ENCODE measurements at regions of chr18 and their contacts with region 1.

Region 1: DNA sequence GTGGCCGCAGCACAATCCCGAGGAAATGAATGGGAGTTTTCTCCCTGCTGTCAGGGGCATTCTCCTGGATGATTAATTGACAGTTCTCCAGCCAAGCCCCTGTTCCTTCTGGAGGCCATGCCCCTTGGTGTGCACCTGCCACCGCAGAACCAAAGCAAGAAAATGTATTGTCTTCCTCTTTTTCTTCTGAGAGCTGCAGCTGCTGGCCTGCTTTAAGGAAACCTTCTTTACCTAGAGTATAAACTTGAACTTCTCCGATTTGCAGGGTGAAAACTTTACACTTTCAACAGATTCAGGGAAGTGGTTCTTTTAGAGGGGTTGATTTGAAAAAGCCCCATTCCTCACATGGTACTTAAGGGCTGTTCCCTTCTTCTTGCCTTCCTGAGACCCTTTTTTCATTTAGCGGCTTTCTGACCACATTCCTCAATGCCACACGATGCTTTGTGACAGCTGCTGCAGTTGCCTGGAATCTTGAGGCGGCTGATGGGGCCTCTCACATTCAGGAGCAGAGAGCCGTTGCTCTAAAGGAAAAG is 402.8 kb downstream of the TXNL1 start:
- DNase-seq: no peak
- H3K4me3 ChIP-seq: no peak overlapping the region
- H3K27ac ChIP-seq: no peak overlapping the region
- H3K4me1 ChIP-seq: peaks cover 0 to 3% of the 10 kb centered on the region in 2 donors
- H3K27me3 ChIP-seq: no peaks in the 10 kb centered on the region
- CTCF ChIP-seq: no peak

Region 2: DNA sequence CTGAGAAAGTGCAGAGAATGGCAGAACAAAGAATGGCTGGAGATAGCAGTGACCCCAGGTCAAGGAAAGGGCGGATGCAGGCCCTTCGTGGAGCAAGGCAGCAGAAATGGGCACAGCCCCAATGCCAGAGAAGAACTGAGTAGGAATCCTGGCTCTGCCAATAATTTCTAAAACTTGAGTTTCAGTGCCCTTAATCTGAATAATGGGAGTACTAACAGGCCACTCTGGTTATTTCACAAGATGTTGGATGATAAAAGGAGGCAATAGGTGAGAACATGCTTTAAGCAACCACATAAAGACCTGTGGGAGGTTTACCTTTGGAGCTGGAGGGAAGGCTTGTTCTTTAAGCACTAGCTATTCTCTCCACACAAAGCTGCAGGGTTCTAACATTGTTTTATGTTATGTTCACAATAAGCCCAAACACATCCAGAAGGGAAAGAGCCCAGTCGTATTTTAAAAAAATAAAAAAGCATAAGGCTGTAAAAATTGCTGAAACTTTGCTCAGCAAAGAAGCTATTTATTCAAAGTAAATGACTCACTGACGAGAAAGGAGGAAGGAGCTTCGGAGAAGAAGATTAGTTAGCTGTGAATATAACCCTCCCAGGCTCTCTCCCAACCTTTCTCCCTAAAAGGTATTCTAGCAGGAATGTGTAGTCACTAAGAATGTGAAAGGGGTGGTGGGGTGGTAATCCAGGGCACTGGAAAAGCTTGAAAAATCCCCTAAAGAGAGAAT is 67.3 kb before region 1 on chr18:
- intact Hi-C with region 1: loop called (anchors 10 kb)
- DNase-seq: no peak
- H3K4me3 ChIP-seq: peak overlapping the region in 1 of 2 donors; percentile 11
- H3K27ac ChIP-seq: peak overlapping the region; percentile 46 to 75
- H3K4me1 ChIP-seq: peaks cover 0 to 14% of the 10 kb centered on the region in 2 donors
- H3K27me3 ChIP-seq: no peaks in the 10 kb centered on the region
- CTCF ChIP-seq: no peak

Region 3: DNA sequence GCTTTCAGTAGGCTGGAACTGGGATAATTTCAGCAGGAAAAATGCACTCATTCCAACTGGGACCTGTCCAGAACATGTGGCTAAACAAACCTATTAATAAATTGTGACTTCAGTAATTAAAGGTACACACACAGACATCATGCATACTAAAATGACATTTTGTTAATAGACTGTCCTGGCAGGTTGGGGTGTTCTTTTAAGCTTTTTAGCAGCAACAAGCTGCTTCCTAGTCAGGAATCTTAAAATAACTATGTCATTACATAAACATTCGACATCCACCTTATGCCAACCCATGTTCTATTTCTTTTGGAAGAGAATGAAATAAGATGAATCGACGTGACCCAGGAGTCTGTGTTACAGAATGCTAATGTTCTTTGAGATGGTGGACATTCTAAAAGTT is 32.9 kb before region 1 on chr18:
- intact Hi-C with region 1: loop called (anchors 2 kb)
- DNase-seq: no peak
- H3K4me3 ChIP-seq: no peak overlapping the region
- H3K27ac ChIP-seq: peak overlapping the region in 1 of 2 donors; percentile 70
- H3K4me1 ChIP-seq: peaks cover 8 to 30% of the 10 kb centered on the region in 2 donors
- H3K27me3 ChIP-seq: no peaks in the 10 kb centered on the region
- CTCF ChIP-seq: no peak

Region 4: DNA sequence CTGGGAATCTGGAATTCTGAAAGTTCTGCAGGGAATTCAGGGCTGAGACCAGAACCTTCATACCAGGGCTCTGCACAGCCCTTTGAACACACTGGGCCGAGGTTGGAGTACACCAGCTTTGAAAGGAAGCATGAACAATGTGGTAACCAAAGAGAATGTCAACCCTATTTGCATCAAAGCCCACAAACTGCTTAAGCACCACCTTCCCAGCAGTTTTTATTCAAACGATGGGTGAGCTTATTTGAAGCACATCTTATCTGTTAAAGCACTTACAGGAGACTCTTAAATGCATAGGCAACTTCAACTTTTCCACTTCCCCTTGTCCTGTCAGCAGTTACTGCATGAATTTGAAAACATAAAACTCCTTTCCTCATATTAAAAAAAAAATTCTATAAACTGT is 306.2 kb after region 1 on chr18:
- intact Hi-C with region 1: no loop called
- DNase-seq: no peak
- H3K4me3 ChIP-seq: no peak overlapping the region
- H3K27ac ChIP-seq: no peak overlapping the region
- H3K4me1 ChIP-seq: no peaks in the 10 kb centered on the region
- H3K27me3 ChIP-seq: no peaks in the 10 kb centered on the region
- CTCF ChIP-seq: no peak

Measured in ascending aorta (tissue), 2 donors.